ENCODE measurements at regions of chr18 and their contacts with region 1.

Region 1: DNA sequence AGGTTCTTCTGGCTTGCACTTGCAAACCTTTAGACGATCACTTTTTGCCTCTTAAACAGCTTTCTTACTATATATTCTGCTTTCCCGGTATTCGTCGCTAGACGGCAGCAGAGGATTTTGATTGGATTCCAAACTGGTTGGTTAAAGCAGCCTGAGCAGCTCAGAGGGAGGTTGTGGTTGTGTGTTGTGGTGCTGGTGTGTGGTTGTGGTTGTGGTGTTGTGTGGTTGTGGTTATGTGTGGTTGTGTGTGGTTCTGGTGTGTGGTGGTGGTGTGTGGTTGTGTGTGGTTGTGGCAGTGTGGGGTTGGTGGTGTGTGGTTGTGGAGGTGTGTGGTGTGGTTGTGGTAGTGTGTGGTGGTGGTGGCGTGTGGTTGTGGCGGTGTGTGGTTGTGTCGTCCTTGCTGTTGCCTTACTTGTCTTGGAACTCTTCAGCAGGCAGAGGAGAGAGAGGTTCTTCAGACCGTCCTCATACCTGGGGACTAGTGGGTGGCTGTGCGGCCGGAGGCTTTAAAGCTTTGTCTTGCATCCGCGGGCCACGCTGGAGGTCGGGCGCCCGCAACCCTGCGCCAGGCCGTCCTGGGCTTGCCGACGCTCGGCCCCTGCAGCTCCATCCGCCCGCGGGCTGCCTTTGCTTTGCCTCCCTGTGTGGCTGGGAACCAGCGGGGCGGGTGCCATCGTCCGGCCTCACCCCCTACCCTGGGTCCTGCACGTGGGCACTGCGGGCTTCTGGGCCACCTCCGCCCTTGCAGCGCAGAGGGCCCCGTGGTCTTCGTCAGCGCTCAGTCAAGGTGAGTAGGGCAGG is 190.8 kb downstream of the ARHGAP28 start:
- DNase-seq: peak; percentile 61
- ATAC-seq: peak; percentile 80
- H3K4me3 ChIP-seq: no peak overlapping the region
- H3K27ac ChIP-seq: no peak overlapping the region
- H3K4me1 ChIP-seq: peaks cover 14% of the 10 kb centered on the region
- H3K27me3 ChIP-seq: no peaks in the 10 kb centered on the region
- CTCF ChIP-seq: peak; percentile 97
- EP300 ChIP-seq: no peak
- POLR2A ChIP-seq: no peak
- RAD21 ChIP-seq: peak; percentile 93

Region 2: GRCh38 chr18:6605115-6605869 is 315.0 kb before region 1 on chr18:
- CTCF ChIA-PET with region 1: no interaction called
- POLR2A ChIA-PET with region 1: no interaction called
- in situ Hi-C with region 1: no loop called
- intact Hi-C with region 1: no loop called
- DNase-seq: no peak
- ATAC-seq: no peak
- H3K4me3 ChIP-seq: no peak overlapping the region
- H3K27ac ChIP-seq: no peak overlapping the region
- H3K4me1 ChIP-seq: no peaks in the 10 kb centered on the region
- H3K27me3 ChIP-seq: no peaks in the 10 kb centered on the region; a peak in 2 of 5 replicates
- CTCF ChIP-seq: no peak
- EP300 ChIP-seq: no peak
- POLR2A ChIP-seq: no peak
- RAD21 ChIP-seq: no peak

Region 3: DNA sequence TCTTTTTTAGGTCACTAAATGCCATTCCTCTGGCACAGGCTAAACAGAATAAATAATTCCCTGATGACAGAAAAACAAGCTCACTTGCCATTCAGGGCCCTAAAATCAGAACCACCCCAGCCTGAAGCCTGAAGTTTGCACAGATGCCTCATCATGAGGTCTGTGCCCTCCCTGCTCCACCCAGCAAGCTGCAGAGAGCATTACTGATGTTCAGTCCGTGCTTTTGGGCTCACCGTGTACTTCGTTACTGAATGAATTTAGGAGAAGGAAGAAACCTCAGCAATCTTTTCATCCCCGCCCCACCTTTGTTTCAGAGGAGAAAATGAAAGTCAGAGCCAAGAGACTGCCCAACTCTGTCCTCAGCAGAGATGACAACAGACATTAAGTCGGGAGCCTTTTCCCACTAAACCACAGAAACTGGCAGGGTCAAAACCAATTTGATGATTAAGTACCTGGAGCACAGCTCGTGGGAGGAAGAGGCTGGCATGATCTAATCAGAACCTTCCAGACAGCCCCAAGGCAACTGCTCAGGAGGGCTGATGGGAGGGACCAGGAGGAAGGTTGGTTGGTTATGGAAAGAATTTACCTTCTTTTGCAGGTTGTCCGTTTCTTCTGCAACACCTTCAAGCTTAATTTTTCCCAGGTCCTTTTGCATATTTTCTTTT is 74.6 kb after region 1 on chr18:
- CTCF ChIA-PET with region 1: interaction called, 20 read pairs
- POLR2A ChIA-PET with region 1: no interaction called
- in situ Hi-C with region 1: loop called (anchors 10 kb)
- intact Hi-C with region 1: loop called (anchors 1 kb)
- DNase-seq: no peak
- ATAC-seq: no peak
- H3K4me3 ChIP-seq: no peak overlapping the region
- H3K27ac ChIP-seq: no peak overlapping the region
- H3K4me1 ChIP-seq: no peaks in the 10 kb centered on the region; the same call in 1 of the 2 replicates
- H3K27me3 ChIP-seq: no peaks in the 10 kb centered on the region
- CTCF ChIP-seq: no peak
- EP300 ChIP-seq: no peak
- POLR2A ChIP-seq: no peak
- RAD21 ChIP-seq: no peak

Region 4: DNA sequence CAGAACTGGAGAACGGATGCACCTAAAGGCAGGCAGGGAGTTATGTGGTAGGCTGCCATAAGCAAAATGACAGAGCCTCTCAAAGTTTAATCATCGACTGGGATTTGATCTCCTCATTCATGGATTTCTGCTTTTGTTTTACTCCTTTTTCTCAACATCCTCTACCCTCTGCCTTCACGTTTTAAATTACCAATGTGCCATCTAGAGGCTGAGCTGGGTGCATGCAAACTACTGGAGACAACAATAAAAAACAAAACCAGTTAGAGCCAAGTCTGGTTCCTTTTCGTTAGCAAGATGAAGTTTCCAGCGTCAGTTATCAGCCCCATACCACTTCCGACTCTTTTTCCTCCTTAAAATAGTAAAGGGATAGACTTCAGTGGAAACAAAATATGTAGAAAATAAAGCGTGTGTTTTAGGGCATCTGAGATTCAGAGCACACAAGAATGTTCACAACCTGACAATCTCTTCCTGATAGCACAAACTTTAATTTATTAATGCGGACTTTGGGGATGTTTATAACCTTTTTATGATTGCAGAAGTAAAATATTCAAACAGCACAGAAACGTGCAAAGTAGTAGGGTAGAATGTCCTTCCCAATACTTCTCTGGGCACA is 80.3 kb after region 1 on chr18:
- CTCF ChIA-PET with region 1: interaction called, 20 read pairs
- POLR2A ChIA-PET with region 1: no interaction called
- in situ Hi-C with region 1: loop called (anchors 10 kb)
- intact Hi-C with region 1: loop called (anchors 1 kb)
- DNase-seq: peak; percentile 21
- ATAC-seq: peak; percentile 71
- H3K4me3 ChIP-seq: no peak overlapping the region
- H3K27ac ChIP-seq: no peak overlapping the region
- H3K4me1 ChIP-seq: no peaks in the 10 kb centered on the region; the same call in 1 of the 2 replicates
- H3K27me3 ChIP-seq: no peaks in the 10 kb centered on the region
- CTCF ChIP-seq: peak; percentile 76
- EP300 ChIP-seq: no peak
- POLR2A ChIP-seq: no peak
- RAD21 ChIP-seq: no peak; the same call in 1 of the 2 replicates

Region 5: GRCh38 chr18:7021994-7022840 is 101.9 kb after region 1 on chr18:
- CTCF ChIA-PET with region 1: interaction called, 26 read pairs
- POLR2A ChIA-PET with region 1: no interaction called
- in situ Hi-C with region 1: loop called (anchors 5 kb)
- intact Hi-C with region 1: loop called (anchors 1 kb)
- DNase-seq: peak; percentile 76
- ATAC-seq: peak; percentile 95
- H3K4me3 ChIP-seq: no peak overlapping the region
- H3K27ac ChIP-seq: no peak overlapping the region
- H3K4me1 ChIP-seq: no peaks in the 10 kb centered on the region
- H3K27me3 ChIP-seq: no peaks in the 10 kb centered on the region; a peak in 1 of 5 replicates
- CTCF ChIP-seq: peak; percentile 75
- EP300 ChIP-seq: no peak
- POLR2A ChIP-seq: no peak
- RAD21 ChIP-seq: peak; percentile 81

Region 6: DNA sequence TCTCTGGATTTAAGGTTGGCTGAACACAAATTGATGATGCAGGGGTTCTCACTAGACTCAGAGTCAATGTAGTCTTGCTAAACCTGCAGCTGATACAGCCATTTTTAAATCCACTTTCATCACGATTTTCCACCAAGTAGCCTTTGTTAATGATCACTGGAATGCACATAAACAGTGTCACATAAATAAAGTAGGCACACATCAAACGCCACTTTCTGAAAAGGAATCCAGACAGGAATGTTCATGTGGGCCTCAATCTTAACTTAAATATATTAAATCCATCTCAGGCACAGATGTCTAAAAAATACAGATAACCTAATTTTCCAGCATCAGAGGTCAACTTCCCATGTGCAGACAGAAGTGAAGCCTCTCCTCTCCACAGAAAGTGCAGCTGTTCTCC is 139.0 kb after region 1 on chr18:
- CTCF ChIA-PET with region 1: no interaction called
- POLR2A ChIA-PET with region 1: no interaction called
- in situ Hi-C with region 1: no loop called
- intact Hi-C with region 1: no loop called
- DNase-seq: no peak
- ATAC-seq: no peak
- H3K4me3 ChIP-seq: no peak overlapping the region
- H3K27ac ChIP-seq: no peak overlapping the region
- H3K4me1 ChIP-seq: peaks cover 23% of the 10 kb centered on the region
- H3K27me3 ChIP-seq: no peaks in the 10 kb centered on the region
- CTCF ChIP-seq: no peak
- EP300 ChIP-seq: no peak
- POLR2A ChIP-seq: no peak
- RAD21 ChIP-seq: no peak

Region 7: GRCh38 chr18:7177116-7177744 is 256.9 kb after region 1 on chr18:
- CTCF ChIA-PET with region 1: interaction called, 13 read pairs
- POLR2A ChIA-PET with region 1: no interaction called
- in situ Hi-C with region 1: loop called (anchors 10 kb)
- intact Hi-C with region 1: no loop called
- DNase-seq: peak; percentile 45
- ATAC-seq: peak; percentile 95
- H3K4me3 ChIP-seq: no peak overlapping the region
- H3K27ac ChIP-seq: no peak overlapping the region
- H3K4me1 ChIP-seq: no peaks in the 10 kb centered on the region
- H3K27me3 ChIP-seq: peaks cover 0 to 4% of the 10 kb centered on the region in 2 experiments; a peak in 1 of 5 replicates
- CTCF ChIP-seq: peak; percentile 75
- EP300 ChIP-seq: no peak
- POLR2A ChIP-seq: no peak
- RAD21 ChIP-seq: 0 out of 2 replicates have a peak, but pooled peaks have one; percentile 23

Measured in HepG2 (cell line).